Spleen (tissue), 13 donors: ENCODE measurements at regions of chr12 and their contacts with region 1.

Region 1: GRCh38 chr12:55743116-55743921 is at the start of gene GDF11:
- DNase-seq: peak; percentile 91
- H3K4me3 ChIP-seq: peak within 1 kb of the TSS; percentile 56 to 97 (median 72)
- H3K27ac ChIP-seq: peak within 1 kb of the TSS in 6 of 8 donors; percentile 26 to 87 (median 72)
- H3K4me1 ChIP-seq: peaks cover 9 to 54% (median 39%) of the 10 kb centered on the region in 6 donors
- H3K27me3 ChIP-seq: peaks cover 0 to 27% (median 2%) of the 10 kb centered on the region in 7 donors
- CTCF ChIP-seq: no peak
- POLR2A ChIP-seq: no peak
- total RNA-seq, gene GDF11: 6.1 to 14.5 (median 10.7) TPM

Region 2: DNA sequence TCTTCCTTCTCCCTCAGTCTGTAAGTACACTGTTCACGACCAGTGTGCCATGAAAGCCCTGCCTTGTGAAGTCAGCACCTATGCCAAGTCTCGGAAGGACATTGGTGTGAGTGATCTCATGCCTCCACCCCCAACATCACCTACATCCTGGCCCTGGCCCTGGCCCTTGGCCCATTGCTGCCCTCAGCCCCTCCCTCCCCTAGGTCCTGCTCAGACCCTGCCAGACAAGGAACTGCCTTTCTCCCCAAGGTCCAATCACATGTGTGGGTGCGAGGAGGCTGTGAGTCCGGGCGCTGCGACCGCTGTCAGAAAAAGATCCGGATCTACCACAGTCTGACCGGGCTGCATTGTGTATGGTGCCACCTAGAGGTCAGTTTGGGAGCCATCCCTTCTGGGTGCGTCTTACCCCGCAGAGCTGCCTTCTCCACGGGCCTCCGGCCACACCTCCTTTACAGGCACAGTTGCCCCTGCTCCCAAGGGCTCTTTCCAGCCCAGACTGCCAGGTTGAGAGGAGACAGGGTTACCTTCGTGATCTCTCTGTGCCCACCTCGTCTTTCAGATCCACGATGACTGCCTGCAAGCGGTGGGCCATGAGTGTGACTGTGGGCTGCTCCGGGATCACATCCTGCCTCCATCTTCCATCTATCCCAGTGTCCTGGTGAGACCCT is 196.9 kb after region 1 on chr12:
- intact Hi-C with region 1: loop called (anchors 5 kb)
- DNase-seq: peak; percentile 94
- H3K4me3 ChIP-seq: peak overlapping the region in 2 of 8 donors; percentile 6 to 47
- H3K27ac ChIP-seq: peak overlapping the region in 7 of 8 donors; percentile 20 to 78 (median 61)
- H3K4me1 ChIP-seq: peaks cover 11 to 59% (median 19%) of the 10 kb centered on the region in 6 donors
- H3K27me3 ChIP-seq: no peaks in the 10 kb centered on the region
- CTCF ChIP-seq: peak; percentile 84 to 97 (median 92)
- POLR2A ChIP-seq: no peak